Caco-2 (cell line): ENCODE measurements at regions of chr1 and their contacts with region 1.

Region 1: GRCh38 chr1:232630047-232630893 is at the start of gene SIPA1L2:
- DNase-seq: peak; percentile 87 to 97
- H3K4me3 ChIP-seq: peak within 1 kb of the TSS; percentile 77
- H3K4me3 Mint-ChIP-seq: peak within 1 kb of the TSS; percentile 91
- H3K27ac Mint-ChIP-seq: peak within 1 kb of the TSS; percentile 79
- H3K4me1 ChIP-seq: peaks cover 20% of the 10 kb centered on the region
- H3K4me1 Mint-ChIP-seq: peaks cover 5% of the 10 kb centered on the region
- H3K27me3 ChIP-seq: no peaks in the 10 kb centered on the region
- H3K27me3 Mint-ChIP-seq: no peaks in the 10 kb centered on the region
- CTCF ChIP-seq: peak; percentile 48 to 73
- total RNA-seq, gene SIPA1L2: 13.2 and 18.6 TPM in 2 replicates

Region 2: GRCh38 chr1:231866392-231867331 is 763.6 kb before region 1 on chr1:
- CTCF ChIA-PET with region 1: interaction called, 6 read pairs
- POLR2A ChIA-PET with region 1: no interaction called
- intact Hi-C with region 1: loop called (anchors 1 kb)
- DNase-seq: peak; percentile 41 to 54
- H3K4me3 ChIP-seq: no peak overlapping the region
- H3K4me3 Mint-ChIP-seq: no peak overlapping the region
- H3K27ac Mint-ChIP-seq: no peak overlapping the region
- H3K4me1 ChIP-seq: no peaks in the 10 kb centered on the region
- H3K4me1 Mint-ChIP-seq: no peaks in the 10 kb centered on the region
- H3K27me3 ChIP-seq: no peaks in the 10 kb centered on the region
- H3K27me3 Mint-ChIP-seq: no peaks in the 10 kb centered on the region
- CTCF ChIP-seq: peak; percentile 80 to 93

Region 3: DNA sequence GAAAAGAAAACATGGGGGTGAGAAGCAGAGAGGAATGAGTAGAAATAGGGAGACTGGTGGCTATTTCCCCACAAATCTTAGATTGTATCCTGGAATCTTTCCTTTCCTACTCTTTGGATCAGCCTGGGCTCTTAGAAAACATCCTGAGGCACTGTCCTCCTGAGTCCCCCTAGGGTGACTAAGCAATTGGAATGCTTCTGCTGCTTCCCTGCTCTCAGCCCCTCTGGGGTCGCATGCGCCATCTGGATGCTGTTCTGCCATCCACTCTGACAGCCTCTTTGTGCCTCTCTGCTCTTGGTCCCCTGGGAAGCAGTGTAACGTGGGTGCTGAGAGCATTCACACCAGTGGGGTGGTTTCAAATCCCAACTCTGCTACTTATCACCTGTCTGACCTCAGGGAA is 443.3 kb before region 1 on chr1:
- CTCF ChIA-PET with region 1: interaction called, 7 read pairs
- POLR2A ChIA-PET with region 1: no interaction called
- intact Hi-C with region 1: loop called (anchors 10 kb)
- DNase-seq: no peak
- H3K4me3 ChIP-seq: no peak overlapping the region
- H3K4me3 Mint-ChIP-seq: no peak overlapping the region
- H3K27ac Mint-ChIP-seq: no peak overlapping the region
- H3K4me1 ChIP-seq: peaks cover 13% of the 10 kb centered on the region
- H3K4me1 Mint-ChIP-seq: peaks cover 12% of the 10 kb centered on the region
- H3K27me3 ChIP-seq: no peaks in the 10 kb centered on the region
- H3K27me3 Mint-ChIP-seq: no peaks in the 10 kb centered on the region
- CTCF ChIP-seq: no peak

Region 4: DNA sequence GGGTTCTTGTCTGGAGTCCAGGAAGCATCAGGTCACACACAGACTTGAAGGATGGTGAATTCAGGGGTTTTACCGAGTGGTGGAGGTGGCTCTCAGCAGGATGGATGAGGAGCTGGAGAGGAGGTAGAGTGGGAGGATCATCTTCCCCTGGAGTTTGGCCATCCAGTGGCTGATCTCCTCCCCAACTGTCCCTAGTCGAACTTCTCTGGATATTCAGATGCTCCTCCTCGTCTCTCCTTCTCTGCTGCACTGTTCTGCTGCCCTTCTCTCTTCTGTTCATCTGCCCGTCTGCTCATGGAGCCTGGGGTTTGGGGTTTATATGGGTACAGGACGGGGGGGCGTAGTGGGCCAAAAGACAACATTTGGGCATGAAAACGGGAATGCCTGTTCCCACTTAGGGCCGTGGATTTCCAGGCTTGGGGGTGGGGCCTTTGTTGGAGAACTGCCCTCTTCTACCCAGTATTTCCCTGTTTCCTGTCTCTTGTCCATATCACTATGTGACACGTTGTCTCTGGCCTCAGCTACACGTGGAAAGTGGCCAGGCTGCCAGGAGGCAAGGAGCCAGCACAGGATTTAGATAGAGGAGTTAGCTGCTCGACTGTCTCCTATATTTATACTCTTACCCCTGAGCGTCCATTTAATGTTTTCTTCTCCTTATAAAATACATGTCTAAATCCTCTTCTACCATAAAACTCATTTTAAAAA is 77.1 kb before region 1 on chr1:
- CTCF ChIA-PET with region 1: interaction called, 18 read pairs
- POLR2A ChIA-PET with region 1: interaction called, 3 read pairs
- intact Hi-C with region 1: loop called (anchors 1 kb)
- DNase-seq: no peak
- H3K4me3 ChIP-seq: no peak overlapping the region
- H3K4me3 Mint-ChIP-seq: no peak overlapping the region
- H3K27ac Mint-ChIP-seq: peak overlapping the region; percentile 76
- H3K4me1 ChIP-seq: peaks cover 55% of the 10 kb centered on the region
- H3K4me1 Mint-ChIP-seq: peaks cover 63% of the 10 kb centered on the region
- H3K27me3 ChIP-seq: no peaks in the 10 kb centered on the region
- H3K27me3 Mint-ChIP-seq: no peaks in the 10 kb centered on the region
- CTCF ChIP-seq: no peak

Region 5: GRCh38 chr1:232748910-232749368 is 118.7 kb after region 1 on chr1:
- CTCF ChIA-PET with region 1: no interaction called
- POLR2A ChIA-PET with region 1: no interaction called
- intact Hi-C with region 1: no loop called
- DNase-seq: no peak
- H3K4me3 ChIP-seq: no peak overlapping the region
- H3K4me3 Mint-ChIP-seq: no peak overlapping the region
- H3K27ac Mint-ChIP-seq: no peak overlapping the region
- H3K4me1 ChIP-seq: no peaks in the 10 kb centered on the region
- H3K4me1 Mint-ChIP-seq: no peaks in the 10 kb centered on the region
- H3K27me3 ChIP-seq: no peaks in the 10 kb centered on the region
- H3K27me3 Mint-ChIP-seq: no peaks in the 10 kb centered on the region
- CTCF ChIP-seq: no peak

Region 6: GRCh38 chr1:233025157-233025915 is 395.1 kb after region 1 on chr1:
- CTCF ChIA-PET with region 1: interaction called, 5 read pairs
- POLR2A ChIA-PET with region 1: no interaction called
- intact Hi-C with region 1: loop called (anchors 1 kb)
- DNase-seq: peak; percentile 82 to 83
- H3K4me3 ChIP-seq: no peak overlapping the region
- H3K4me3 Mint-ChIP-seq: no peak overlapping the region
- H3K27ac Mint-ChIP-seq: no peak overlapping the region
- H3K4me1 ChIP-seq: peaks cover 6% of the 10 kb centered on the region; the same call in 1 of the 2 replicates
- H3K4me1 Mint-ChIP-seq: peaks cover 23% of the 10 kb centered on the region
- H3K27me3 ChIP-seq: no peaks in the 10 kb centered on the region
- H3K27me3 Mint-ChIP-seq: peaks cover 7% of the 10 kb centered on the region
- CTCF ChIP-seq: peak; percentile 74 to 94